Activated T-helper 1 cell treated with anti-CD3 and anti-CD28 coated beads, Interleukin-12 subunit alpha, Interleukin-12 subunit beta, Interleukin-2, Interleukin-4 antibody, amounts not matched to agents 30 ng/mL and 10 ng/mL and 1 ng/mL, durations not matched to agents 14 hours and 24 hours and 36 hours (primary cell): ENCODE measurements at regions of chr3 and their contacts with region 1.

Region 1: GRCh38 chr3:184777336-184778004 is 34.5 kb upstream of the VPS8 start:
- DNase-seq: peak; percentile 69
- H3K4me3 Mint-ChIP-seq: no peak overlapping the region
- H3K27ac Mint-ChIP-seq: no peak overlapping the region
- H3K4me1 Mint-ChIP-seq: no peaks in the 10 kb centered on the region
- H3K27me3 Mint-ChIP-seq: peaks cover 17% of the 10 kb centered on the region

Region 2: DNA sequence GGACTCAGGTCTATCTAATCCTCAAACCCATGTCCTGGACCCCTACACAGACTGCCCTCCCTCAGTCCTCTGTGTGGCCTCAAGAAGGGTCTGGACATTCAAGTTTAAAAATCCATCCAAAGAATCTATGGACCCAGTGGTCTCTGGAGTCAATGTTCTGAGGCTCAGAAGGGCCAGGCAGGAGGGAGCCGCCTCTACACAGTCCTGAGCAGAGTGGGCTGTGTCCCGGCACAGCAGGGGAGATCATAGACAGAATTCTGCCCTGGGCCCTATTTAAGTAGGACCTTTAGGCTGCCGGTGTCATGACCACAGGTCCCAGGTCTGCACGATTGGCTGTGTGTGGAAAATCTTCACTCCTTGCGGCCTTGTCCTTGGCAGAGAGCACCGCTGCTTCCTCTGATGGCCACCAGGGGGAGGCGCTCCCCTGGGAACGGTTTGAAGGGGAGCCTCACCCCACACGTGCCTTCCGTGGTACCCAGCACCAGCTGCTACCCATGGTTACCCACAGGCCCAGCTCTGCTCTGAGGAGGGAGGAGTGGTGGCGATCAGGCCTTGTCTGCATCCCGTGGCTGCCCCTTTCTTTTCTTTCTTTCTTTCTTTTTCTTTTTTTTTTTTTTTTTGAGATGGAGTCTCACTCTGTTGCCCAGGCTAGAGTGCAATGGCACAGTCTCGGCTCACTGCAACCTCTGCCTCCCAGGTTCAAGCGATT is 359.7 kb before region 1 on chr3:
- intact Hi-C with region 1: loop called (anchors 2 kb)
- DNase-seq: peak; percentile 43
- H3K4me3 Mint-ChIP-seq: no peak overlapping the region
- H3K27ac Mint-ChIP-seq: no peak overlapping the region
- H3K4me1 Mint-ChIP-seq: no peaks in the 10 kb centered on the region
- H3K27me3 Mint-ChIP-seq: peaks cover 5% of the 10 kb centered on the region

Region 3: DNA sequence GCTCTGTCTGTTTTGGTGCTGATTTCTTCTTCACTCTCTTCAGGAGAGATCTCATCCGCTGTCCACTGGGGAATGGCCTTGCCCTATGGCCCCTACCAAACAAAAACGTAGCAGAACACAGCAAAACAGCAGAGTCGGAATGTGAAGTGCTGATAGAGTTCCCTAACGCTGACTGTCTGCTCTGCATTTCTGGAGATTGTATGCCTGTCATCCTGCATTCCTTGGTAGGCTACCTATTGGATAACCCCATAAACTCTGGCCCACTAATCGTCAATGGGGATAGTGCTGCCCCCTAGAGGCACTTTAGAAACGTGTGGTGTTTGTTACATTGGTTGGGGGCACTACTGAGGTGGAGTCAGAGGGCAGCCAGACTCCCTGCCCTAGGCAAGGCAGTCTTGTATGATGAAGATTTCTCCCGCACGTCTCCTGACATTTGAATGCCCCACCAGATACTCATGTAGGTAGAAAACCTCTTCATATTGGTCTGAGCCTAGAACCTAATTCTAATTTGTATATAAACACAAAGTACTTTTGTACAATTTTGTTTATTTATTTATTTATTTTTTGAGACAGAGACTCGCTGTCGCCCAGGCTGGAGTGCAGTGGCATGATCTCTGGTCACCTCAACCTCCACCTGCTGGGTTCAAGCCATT is 50.0 kb before region 1 on chr3:
- intact Hi-C with region 1: loop called (anchors 1 kb)
- DNase-seq: peak; percentile 8
- H3K4me3 Mint-ChIP-seq: no peak overlapping the region
- H3K27ac Mint-ChIP-seq: no peak overlapping the region
- H3K4me1 Mint-ChIP-seq: no peaks in the 10 kb centered on the region
- H3K27me3 Mint-ChIP-seq: peaks cover 40% of the 10 kb centered on the region

Region 4: DNA sequence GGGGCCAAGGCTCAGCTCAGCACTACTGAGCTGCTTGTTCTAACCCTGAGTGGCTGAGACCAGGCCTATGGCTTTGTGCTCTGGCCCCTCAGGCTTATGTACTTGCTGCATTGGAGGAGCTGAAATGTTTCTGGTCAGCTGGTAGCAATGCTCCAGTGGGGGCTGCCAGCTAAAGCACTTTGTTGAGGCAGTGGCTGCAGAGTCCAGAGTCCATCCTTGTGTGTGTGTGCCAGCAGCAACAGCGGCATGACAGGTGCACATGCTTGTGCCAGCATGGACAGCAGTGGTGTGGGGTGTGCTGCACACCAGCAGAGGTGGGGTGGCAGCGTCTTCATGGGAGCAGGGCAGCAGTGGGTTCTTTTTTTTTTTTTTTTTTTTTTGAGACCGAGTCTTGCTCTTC is 203.6 kb after region 1 on chr3:
- intact Hi-C with region 1: no loop called
- DNase-seq: no peak
- H3K4me3 Mint-ChIP-seq: no peak overlapping the region
- H3K27ac Mint-ChIP-seq: no peak overlapping the region
- H3K4me1 Mint-ChIP-seq: no peaks in the 10 kb centered on the region
- H3K27me3 Mint-ChIP-seq: no peaks in the 10 kb centered on the region